Activated T-helper 1 cell treated with anti-CD3 and anti-CD28 coated beads, Interleukin-12 subunit alpha, Interleukin-12 subunit beta, Interleukin-2, Interleukin-4 antibody, amounts not matched to agents 30 ng/mL and 10 ng/mL and 1 ng/mL, durations not matched to agents 14 hours and 24 hours and 36 hours (primary cell): ENCODE measurements at regions of chr15 and their contacts with region 1.

Region 1: DNA sequence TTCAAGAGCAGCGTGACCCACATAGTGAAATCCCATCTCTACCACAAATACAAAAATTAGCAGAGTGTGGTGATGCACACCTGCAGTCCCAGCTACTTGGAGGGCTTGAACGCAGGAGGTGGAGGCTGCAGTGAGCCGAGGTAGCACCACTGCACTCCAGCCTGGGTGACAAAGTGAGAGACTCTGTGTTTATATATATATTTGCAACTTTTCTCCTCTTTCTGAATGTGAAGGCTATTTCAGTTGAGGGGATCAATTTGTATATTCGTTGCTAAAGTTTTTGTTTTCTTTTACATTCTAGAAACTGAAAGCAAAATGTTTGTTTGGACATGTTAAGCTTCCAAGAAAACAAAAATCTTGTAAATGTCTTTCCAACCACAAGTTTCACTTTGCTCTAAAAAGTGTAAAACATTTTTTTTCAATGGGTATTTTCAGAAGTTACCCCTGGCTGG is 29.8 kb upstream of the FAM98B start:
- DNase-seq: no peak
- H3K4me3 Mint-ChIP-seq: peak overlapping the region; percentile 46
- H3K27ac Mint-ChIP-seq: no peak overlapping the region
- H3K4me1 Mint-ChIP-seq: peaks cover 40% of the 10 kb centered on the region
- H3K27me3 Mint-ChIP-seq: peaks cover 24% of the 10 kb centered on the region

Region 2: GRCh38 chr15:38084289-38084688 is 339.8 kb before region 1 on chr15:
- intact Hi-C with region 1: loop called (anchors 2 kb)
- DNase-seq: no peak
- H3K4me3 Mint-ChIP-seq: no peak overlapping the region
- H3K27ac Mint-ChIP-seq: no peak overlapping the region
- H3K4me1 Mint-ChIP-seq: peaks cover 10% of the 10 kb centered on the region
- H3K27me3 Mint-ChIP-seq: peaks cover 16% of the 10 kb centered on the region

Region 3: GRCh38 chr15:38378161-38378560 is 46.0 kb before region 1 on chr15:
- intact Hi-C with region 1: no loop called
- DNase-seq: no peak
- H3K4me3 Mint-ChIP-seq: no peak overlapping the region
- H3K27ac Mint-ChIP-seq: no peak overlapping the region
- H3K4me1 Mint-ChIP-seq: no peaks in the 10 kb centered on the region
- H3K27me3 Mint-ChIP-seq: peaks cover 28% of the 10 kb centered on the region

Region 4: GRCh38 chr15:38440353-38441129 is 16.4 kb after region 1 on chr15:
- intact Hi-C with region 1: loop called (anchors 2 kb)
- DNase-seq: peak; percentile 38
- H3K4me3 Mint-ChIP-seq: no peak overlapping the region
- H3K27ac Mint-ChIP-seq: peak overlapping the region; percentile 56
- H3K4me1 Mint-ChIP-seq: peaks cover 18% of the 10 kb centered on the region
- H3K27me3 Mint-ChIP-seq: peaks cover 50% of the 10 kb centered on the region

Region 5: DNA sequence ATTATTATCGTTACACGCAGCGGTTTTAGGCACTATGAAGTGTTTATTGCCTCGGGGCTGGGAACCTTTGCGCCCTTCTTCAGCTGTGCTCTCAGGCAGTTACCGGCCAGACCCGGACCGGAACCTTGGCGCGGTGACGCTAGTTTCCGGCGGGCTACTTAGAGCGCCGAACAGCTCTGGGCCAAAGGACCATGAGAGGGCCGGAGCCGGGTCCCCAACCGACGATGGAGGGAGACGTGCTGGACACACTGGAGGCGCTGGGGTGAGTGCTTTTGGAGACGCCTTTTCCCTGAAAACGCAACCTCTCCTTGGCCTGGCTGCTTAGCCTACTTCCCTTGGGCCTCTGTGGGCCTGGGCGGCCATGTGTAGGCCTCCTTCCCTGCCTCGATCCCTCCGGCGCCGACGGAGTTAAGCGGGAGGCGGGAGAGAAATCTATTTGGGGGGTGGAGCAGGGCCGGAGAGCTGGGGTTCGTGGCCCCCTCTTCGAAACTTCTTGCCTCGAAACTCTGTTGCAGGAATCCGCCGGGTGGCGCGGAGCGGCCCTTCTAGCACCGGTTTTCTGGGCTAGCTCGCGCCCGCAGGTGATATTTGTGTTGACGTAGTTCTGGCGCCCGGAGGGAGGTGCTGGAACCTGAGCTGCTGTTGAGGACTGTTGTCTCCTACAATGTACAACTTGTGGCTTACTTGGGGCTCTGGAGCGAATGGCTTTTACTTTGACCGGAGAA is 30.0 kb after region 1 on chr15 and contains the start of gene FAM98B:
- intact Hi-C with region 1: loop called (anchors 1 kb)
- DNase-seq: peak; percentile 85
- H3K4me3 Mint-ChIP-seq: peak within 1 kb of the TSS; percentile 96
- H3K27ac Mint-ChIP-seq: peak within 1 kb of the TSS; percentile 95
- H3K4me1 Mint-ChIP-seq: peaks cover 22% of the 10 kb centered on the region
- H3K27me3 Mint-ChIP-seq: peaks cover 19% of the 10 kb centered on the region
- total RNA-seq, gene FAM98B: 64.4 and 66.9 TPM in 2 replicates

Region 6: DNA sequence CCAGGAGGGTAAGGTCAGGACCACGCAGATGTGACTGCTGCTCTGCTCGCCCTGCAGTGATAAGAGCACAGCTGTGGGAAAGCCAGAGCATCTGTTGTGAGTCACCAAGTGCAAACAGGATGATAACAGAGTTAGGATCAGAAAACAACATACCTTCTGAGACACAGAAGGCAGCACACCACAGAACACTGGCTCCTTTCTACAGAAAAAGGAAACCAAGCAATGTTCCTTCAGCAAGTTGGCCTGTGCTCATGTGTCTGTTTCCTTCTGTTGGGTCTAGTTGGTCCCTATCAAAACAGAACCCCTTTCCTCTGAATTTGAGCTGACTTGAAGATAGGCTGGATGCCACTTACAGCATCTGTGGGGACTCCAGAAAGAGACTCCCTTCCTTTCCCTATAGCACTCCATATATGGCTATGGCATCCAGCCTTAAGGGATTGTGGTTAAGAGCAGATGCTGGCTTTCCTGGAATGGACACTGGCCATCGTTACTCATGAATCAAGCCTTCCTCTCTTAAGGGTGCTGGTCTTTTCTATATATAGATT is 716.0 kb after region 1 on chr15:
- intact Hi-C with region 1: loop called (anchors 5 kb)
- DNase-seq: peak; percentile 14
- H3K4me3 Mint-ChIP-seq: no peak overlapping the region
- H3K27ac Mint-ChIP-seq: peak overlapping the region; percentile 37
- H3K4me1 Mint-ChIP-seq: peaks cover 54% of the 10 kb centered on the region
- H3K27me3 Mint-ChIP-seq: no peaks in the 10 kb centered on the region

Region 7: GRCh38 chr15:39624806-39625205 is 1200.7 kb after region 1 on chr15:
- intact Hi-C with region 1: loop called (anchors 2 kb)
- DNase-seq: peak; percentile 65
- H3K4me3 Mint-ChIP-seq: peak overlapping the region; percentile 71
- H3K27ac Mint-ChIP-seq: peak overlapping the region; percentile 98
- H3K4me1 Mint-ChIP-seq: peaks cover 81% of the 10 kb centered on the region
- H3K27me3 Mint-ChIP-seq: no peaks in the 10 kb centered on the region